ENCODE measurements at regions of chr3 and their contacts with region 1.

Region 1: DNA sequence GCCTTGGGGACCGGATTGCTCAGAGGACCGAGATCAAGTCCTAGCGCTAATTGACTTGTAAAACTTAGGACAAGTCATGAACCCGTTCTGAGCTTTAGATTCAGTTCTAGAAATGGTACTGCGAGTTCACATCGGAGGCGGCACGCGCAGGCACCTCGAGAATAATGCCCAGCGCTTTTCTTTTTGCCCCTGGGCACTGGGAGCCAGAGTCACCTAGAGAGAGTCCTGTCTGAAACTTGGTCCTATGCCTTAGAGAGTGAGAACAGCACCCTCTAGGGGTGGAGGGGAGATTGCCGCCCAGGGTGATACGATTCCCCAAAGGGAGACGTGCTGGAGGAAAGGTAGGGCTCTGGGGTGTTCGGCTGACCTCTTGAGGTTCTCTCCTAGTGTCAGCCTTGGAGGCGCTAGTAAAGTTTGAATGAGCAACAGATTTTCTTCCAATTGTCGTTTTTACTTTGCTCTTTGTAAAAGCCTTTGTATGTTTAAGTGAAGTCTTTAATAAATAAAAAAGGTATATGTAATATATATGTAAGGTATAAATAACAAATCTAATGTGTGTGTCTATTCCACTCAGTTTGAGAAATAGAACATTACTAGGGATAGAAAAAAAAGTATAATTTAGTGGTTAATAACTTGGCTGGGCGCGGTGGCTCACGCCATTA is 826 bp downstream of the EEF1AKMT4 start:
- DNase-seq: peak; percentile 97
- H3K4me3 Mint-ChIP-seq: peak overlapping the region; percentile 98
- H3K27ac Mint-ChIP-seq: peak overlapping the region; percentile 100
- H3K4me1 Mint-ChIP-seq: peaks cover 16% of the 10 kb centered on the region
- H3K27me3 Mint-ChIP-seq: no peaks in the 10 kb centered on the region

Region 2: GRCh38 chr3:184143327-184143726 is 107.0 kb before region 1 on chr3:
- intact Hi-C with region 1: no loop called
- DNase-seq: no peak
- H3K4me3 Mint-ChIP-seq: no peak overlapping the region
- H3K27ac Mint-ChIP-seq: peak overlapping the region; percentile 37
- H3K4me1 Mint-ChIP-seq: peaks cover 2% of the 10 kb centered on the region
- H3K27me3 Mint-ChIP-seq: no peaks in the 10 kb centered on the region

Region 3: GRCh38 chr3:184174646-184175492 is 75.4 kb before region 1 on chr3 and contains the start of gene AP2M1:
- intact Hi-C with region 1: loop called (anchors 1 kb)
- DNase-seq: peak; percentile 100
- H3K4me3 Mint-ChIP-seq: peak within 1 kb of the TSS; percentile 91
- H3K27ac Mint-ChIP-seq: peak within 1 kb of the TSS; percentile 81
- H3K4me1 Mint-ChIP-seq: peaks cover 26% of the 10 kb centered on the region
- H3K27me3 Mint-ChIP-seq: no peaks in the 10 kb centered on the region
- total RNA-seq, gene AP2M1: 241 and 242 TPM in 2 replicates

Region 4: DNA sequence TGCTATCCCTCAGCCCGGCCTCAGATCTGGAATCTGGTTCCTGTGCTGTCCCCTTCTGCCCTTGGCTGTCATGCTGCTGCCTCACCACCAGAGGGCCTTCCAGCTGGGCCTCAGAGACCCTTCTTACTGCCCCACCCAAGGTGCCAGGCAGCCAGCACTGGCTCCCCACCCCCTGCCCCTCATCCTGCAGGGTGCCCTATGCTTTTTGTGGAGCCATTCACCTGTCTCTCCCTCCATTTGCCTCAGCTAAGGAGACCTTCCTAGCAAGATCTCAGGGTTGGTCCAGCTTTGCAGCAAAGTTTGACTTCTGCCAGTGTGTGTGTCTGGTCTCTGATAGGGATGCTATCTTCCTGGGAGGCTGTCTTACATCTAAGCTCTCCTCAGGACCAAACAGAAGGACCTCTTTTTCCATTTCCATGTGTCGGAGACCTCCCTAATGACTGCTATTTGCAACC is 22.8 kb before region 1 on chr3:
- intact Hi-C with region 1: loop called (anchors 1 kb)
- DNase-seq: peak; percentile 87
- H3K4me3 Mint-ChIP-seq: no peak overlapping the region
- H3K27ac Mint-ChIP-seq: no peak overlapping the region
- H3K4me1 Mint-ChIP-seq: peaks cover 8% of the 10 kb centered on the region
- H3K27me3 Mint-ChIP-seq: peaks cover 53% of the 10 kb centered on the region

Region 5: DNA sequence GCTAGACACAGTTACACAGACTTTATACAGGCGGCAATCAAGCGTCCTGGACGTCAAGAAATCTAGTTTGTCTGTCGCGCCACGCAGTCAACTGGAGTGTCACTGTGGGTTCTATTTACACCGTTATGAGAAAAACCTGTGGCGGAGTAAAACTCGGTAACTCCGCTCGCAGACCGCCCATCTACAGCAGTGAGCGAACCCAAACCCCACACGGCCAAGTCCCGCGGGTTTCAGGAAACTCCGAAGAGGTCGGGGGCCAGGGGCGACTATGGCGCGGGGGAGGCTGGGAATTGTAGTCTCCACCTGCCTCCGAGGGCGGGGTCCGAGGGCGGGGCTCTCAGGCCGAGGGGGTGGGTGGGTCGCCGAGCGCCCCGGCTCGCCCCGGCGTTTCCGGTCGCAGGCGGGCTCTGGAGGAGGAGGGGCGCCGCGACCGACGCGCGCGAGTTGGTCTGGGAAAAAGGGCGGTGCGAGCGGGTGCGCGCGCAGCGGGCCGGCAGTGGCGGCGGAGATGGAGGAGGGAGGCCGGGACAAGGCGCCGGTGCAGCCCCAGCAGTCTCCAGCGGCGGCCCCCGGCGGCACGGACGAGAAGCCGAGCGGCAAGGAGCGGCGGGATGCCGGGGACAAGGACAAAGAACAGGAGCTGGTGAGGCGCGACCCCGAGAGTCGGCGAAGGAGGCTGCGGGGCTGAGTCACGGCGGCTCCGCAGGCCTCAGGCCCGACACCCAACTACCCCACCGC is 48.6 kb after region 1 on chr3 and contains the start of gene PSMD2:
- intact Hi-C with region 1: loop called (anchors 1 kb)
- DNase-seq: peak; percentile 98
- H3K4me3 Mint-ChIP-seq: peak within 1 kb of the TSS; percentile 99
- H3K27ac Mint-ChIP-seq: peak within 1 kb of the TSS; percentile 90
- H3K4me1 Mint-ChIP-seq: peaks cover 20% of the 10 kb centered on the region
- H3K27me3 Mint-ChIP-seq: peaks cover 6% of the 10 kb centered on the region
- total RNA-seq, gene PSMD2: 280 and 283 TPM in 2 replicates

Region 6: GRCh38 chr3:184362668-184363540 is 112.6 kb after region 1 on chr3:
- intact Hi-C with region 1: loop called (anchors 1 kb)
- DNase-seq: peak; percentile 99
- H3K4me3 Mint-ChIP-seq: peak overlapping the region; percentile 98
- H3K27ac Mint-ChIP-seq: peak overlapping the region; percentile 99
- H3K4me1 Mint-ChIP-seq: peaks cover 26% of the 10 kb centered on the region
- H3K27me3 Mint-ChIP-seq: peaks cover 8% of the 10 kb centered on the region

Measured in activated CD4-positive, alpha-beta T cell treated with anti-CD3 and anti-CD28 coated beads, Interleukin-2, amount 10 ng/mL, durations not matched to agents 24 days and 14 days (primary cell).